ENCODE measurements at regions of chr2 and their contacts with region 1.

Region 1: GRCh38 chr2:177263451-177264208 is 897 bp downstream of the NFE2L2 start:
- DNase-seq: peak; percentile 95
- ATAC-seq: peak; percentile 68
- H3K4me3 Mint-ChIP-seq: peak overlapping the region; percentile 86
- H3K27ac Mint-ChIP-seq: peak overlapping the region; percentile 100
- H3K4me1 Mint-ChIP-seq: peaks cover 52% of the 10 kb centered on the region
- H3K27me3 Mint-ChIP-seq: no peaks in the 10 kb centered on the region

Region 2: GRCh38 chr2:177221534-177221933 is 42.1 kb before region 1 on chr2:
- CTCF ChIA-PET with region 1: interaction called, 21 read pairs
- POLR2A ChIA-PET with region 1: interaction called, 11 read pairs
- DNase-seq: no peak
- ATAC-seq: no peak
- H3K4me3 Mint-ChIP-seq: no peak overlapping the region
- H3K27ac Mint-ChIP-seq: no peak overlapping the region
- H3K4me1 Mint-ChIP-seq: peaks cover 38% of the 10 kb centered on the region
- H3K27me3 Mint-ChIP-seq: no peaks in the 10 kb centered on the region

Region 3: DNA sequence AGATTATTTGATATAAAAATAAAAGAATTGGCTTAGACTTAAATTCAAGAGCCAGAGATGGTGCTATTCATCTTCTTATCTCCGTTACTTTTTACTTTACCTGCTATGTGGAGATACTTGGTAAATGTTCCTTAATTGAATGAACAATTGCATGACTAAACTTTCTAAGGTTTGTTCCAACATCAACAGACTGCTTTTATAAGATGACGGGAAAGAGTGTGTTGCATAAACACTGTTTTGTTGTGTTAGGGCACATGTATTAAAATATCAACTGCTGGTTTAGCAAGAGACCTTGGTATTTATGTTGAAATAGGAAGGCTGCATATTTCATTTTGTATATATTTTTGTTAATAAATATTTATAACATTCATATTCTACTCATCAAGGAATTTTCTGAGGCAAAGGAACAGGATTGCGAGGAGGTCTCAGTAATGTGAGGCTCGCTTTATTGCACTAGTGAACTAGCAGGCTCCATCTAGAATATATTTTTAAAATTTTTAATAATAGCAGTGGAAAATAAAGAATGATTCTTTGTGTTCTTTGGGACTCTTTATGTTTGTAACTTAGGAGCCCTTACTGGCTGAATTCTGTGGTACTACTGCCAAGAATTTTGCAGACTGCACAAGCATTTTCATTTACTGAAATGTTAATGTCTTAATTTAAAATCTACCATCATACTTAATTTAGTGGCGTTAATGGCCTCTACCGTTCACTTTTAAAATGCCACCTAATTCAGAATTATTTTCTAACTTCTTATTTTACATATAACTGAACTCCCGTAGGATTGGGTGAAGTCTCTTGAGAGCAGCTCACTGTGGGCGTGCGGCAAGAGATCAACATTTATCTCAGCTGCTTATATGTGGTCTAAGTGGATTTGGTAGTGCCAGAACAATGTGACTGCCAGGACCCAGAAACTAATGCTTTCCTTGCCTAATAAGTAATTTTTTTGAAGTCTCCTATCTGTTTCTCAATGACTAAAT is 11.7 kb after region 1 on chr2:
- CTCF ChIA-PET with region 1: interaction called, 136 read pairs
- POLR2A ChIA-PET with region 1: interaction called, 74 read pairs
- DNase-seq: no peak
- ATAC-seq: no peak
- H3K4me3 Mint-ChIP-seq: no peak overlapping the region
- H3K27ac Mint-ChIP-seq: no peak overlapping the region
- H3K4me1 Mint-ChIP-seq: peaks cover 29% of the 10 kb centered on the region
- H3K27me3 Mint-ChIP-seq: no peaks in the 10 kb centered on the region

Region 4: GRCh38 chr2:177296040-177296439 is 32.4 kb after region 1 on chr2:
- CTCF ChIA-PET with region 1: interaction called, 140 read pairs
- POLR2A ChIA-PET with region 1: interaction called, 143 read pairs
- DNase-seq: no peak
- ATAC-seq: peak; percentile 60
- H3K4me3 Mint-ChIP-seq: no peak overlapping the region
- H3K27ac Mint-ChIP-seq: no peak overlapping the region
- H3K4me1 Mint-ChIP-seq: peaks cover 50% of the 10 kb centered on the region
- H3K27me3 Mint-ChIP-seq: no peaks in the 10 kb centered on the region

Region 5: DNA sequence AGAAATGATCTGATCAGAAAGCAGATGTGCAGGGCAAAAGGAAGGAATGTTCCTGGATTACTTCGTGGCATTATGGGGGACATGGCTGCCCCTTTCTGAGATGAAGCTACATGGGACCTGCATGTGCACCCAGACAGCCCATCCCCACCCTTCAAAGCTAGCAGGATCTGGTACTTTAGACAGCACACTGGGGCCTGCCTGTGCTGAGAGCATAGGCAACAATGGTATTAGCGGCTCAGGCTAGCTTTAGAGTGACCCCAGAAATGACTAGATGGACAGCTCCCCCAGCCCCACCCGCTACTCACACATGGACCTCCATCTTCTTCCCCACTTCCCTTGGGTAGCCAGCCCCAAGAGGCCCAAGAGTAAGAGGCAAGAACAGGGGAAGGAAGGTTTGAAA is 62.4 kb after region 1 on chr2:
- CTCF ChIA-PET with region 1: interaction called, 32 read pairs
- POLR2A ChIA-PET with region 1: interaction called, 25 read pairs
- DNase-seq: no peak
- ATAC-seq: no peak
- H3K4me3 Mint-ChIP-seq: no peak overlapping the region
- H3K27ac Mint-ChIP-seq: no peak overlapping the region
- H3K4me1 Mint-ChIP-seq: peaks cover 3% of the 10 kb centered on the region
- H3K27me3 Mint-ChIP-seq: no peaks in the 10 kb centered on the region